Natural killer cell (primary cell): ENCODE measurements at regions of chr2 and their contacts with region 1.

Region 1: DNA sequence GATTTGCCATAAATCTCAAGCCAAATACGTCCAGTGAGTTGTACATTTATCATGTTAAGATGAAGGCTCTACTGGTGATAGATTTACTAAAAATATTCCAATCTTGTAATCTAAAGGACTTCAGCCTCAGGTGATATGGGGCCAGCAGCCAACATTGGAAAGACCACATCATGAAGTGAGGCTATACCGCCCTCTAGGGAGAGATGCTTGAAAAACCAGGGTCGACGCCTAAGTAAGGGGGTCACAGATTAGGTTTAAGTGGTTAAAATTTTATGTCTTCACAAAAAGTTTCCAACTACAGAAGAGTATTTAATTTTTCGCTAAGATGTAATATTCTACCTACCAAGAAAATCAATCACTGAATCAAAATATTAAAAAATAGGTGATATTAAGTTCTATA is 33.3 kb downstream of the DOCK10 start:
- DNase-seq: peak in 1 of 2 donors; percentile 62
- ATAC-seq: peak in 2 of 3 donors; percentile 33 to 61
- H3K4me3 ChIP-seq: no peak overlapping the region
- H3K4me3 Mint-ChIP-seq: no peak overlapping the region
- H3K27ac ChIP-seq: no peak overlapping the region
- H3K27ac Mint-ChIP-seq: peak overlapping the region; percentile 83 to 90
- H3K4me1 ChIP-seq: peaks cover 4% of the 10 kb centered on the region
- H3K4me1 Mint-ChIP-seq: peaks cover 82 to 86% of the 10 kb centered on the region in 2 donors
- H3K27me3 ChIP-seq: no peaks in the 10 kb centered on the region
- H3K27me3 Mint-ChIP-seq: no peaks in the 10 kb centered on the region
- CTCF ChIP-seq: peak; percentile 64

Region 2: DNA sequence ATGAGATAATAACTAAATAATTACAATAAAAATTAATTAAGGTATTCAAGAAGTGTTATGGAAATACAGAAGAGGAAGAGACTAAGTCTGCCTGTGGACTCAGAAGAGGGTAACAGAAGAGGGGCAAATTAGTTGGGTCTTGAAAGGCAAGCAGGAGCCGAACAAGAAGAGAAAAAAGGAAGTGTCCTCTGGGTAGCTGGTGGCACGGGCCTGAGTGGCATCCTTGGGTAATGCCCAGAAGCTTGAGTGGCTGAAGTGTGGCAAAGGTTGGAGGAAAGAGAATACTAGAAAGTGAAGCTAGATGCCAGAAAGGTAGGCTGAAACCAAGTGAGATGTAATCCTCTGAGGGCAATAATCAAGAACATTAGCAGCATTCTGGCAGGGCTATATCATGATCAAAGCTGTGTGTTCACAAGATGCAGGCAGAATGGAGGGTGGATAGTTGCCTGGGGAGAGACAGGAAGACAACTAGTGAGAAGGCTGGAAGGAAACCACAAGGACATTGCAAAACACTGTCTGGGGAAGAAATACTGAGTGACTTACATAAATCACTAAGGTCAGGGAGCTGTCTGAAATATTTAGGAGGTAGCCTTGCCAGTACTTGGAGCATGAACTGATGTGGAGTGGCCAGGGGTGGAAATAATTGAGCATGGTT is 17.1 kb after region 1 on chr2:
- intact Hi-C with region 1: loop called (anchors 2 kb)
- DNase-seq: peak in 1 of 2 donors; percentile 55
- ATAC-seq: peak; percentile 12 to 51 (median 27)
- H3K4me3 ChIP-seq: no peak overlapping the region
- H3K4me3 Mint-ChIP-seq: peak overlapping the region; percentile 47
- H3K27ac ChIP-seq: peak overlapping the region; percentile 72
- H3K27ac Mint-ChIP-seq: peak overlapping the region; percentile 76 to 95
- H3K4me1 ChIP-seq: peaks cover 51% of the 10 kb centered on the region
- H3K4me1 Mint-ChIP-seq: peaks cover 70 to 77% of the 10 kb centered on the region in 2 donors
- H3K27me3 ChIP-seq: no peaks in the 10 kb centered on the region
- H3K27me3 Mint-ChIP-seq: no peaks in the 10 kb centered on the region
- CTCF ChIP-seq: no peak